ENCODE measurements at regions of chr15 and their contacts with region 1.

Region 1: GRCh38 chr15:66080717-66081398 is 172.7 kb downstream of the MEGF11 start:
- DNase-seq: no peak
- ATAC-seq: no peak

Region 2: GRCh38 chr15:66043264-66043663 is 37.6 kb before region 1 on chr15:
- intact Hi-C with region 1: loop called (anchors 5 kb)
- DNase-seq: no peak
- ATAC-seq: no peak

Measured in Right ventricle myocardium inferior (tissue), 1 donor.